PC-9 (cell line): ENCODE measurements at regions of chr13 and their contacts with region 1.

Region 1: GRCh38 chr13:72920097-72920496 is 138.2 kb downstream of the PIBF1 start:
- DNase-seq: no peak
- H3K4me3 ChIP-seq: no peak overlapping the region
- H3K27ac ChIP-seq: no peak overlapping the region
- H3K4me1 ChIP-seq: no peaks in the 10 kb centered on the region
- H3K27me3 ChIP-seq: no peaks in the 10 kb centered on the region
- CTCF ChIP-seq: no peak

Region 2: DNA sequence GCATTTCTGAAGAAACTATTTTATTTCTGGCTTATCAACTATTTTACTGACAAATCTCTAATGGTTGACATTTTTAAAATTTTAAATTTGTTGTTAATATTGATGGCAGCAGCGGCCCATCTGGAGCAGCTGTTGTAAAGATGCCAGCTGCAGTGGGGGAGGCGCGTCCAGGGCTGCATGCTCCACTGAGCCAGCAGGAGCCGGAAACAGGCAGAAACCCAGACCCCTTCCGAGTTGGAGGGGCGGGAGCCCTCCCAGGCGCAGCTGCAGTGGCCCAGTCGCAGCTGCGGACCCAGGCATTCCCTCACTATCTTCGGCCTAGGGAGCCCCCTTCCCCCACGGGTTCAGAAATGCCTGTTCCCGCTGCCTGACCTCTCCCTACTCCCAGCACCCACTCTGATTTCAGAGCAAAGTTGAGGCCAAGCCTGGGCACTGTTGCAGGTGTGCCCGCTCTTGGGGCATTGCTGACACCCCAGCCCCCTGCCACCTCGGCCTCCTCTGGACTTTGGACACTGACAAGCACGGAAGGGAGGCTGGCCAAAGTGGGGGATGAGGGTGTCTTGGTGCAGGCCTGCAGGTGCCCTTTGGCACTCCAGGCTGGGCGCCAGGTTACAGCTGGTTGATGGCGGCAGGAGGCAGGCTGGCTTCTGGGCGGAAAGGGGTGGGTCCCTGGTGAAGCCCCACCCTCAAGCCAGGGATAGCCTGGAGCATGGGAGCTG is 69.0 kb before region 1 on chr13:
- CTCF ChIA-PET with region 1: no interaction called
- POLR2A ChIA-PET with region 1: no interaction called
- intact Hi-C with region 1: loop called (anchors 10 kb)
- DNase-seq: no peak
- H3K4me3 ChIP-seq: no peak overlapping the region
- H3K27ac ChIP-seq: no peak overlapping the region
- H3K4me1 ChIP-seq: no peaks in the 10 kb centered on the region
- H3K27me3 ChIP-seq: no peaks in the 10 kb centered on the region
- CTCF ChIP-seq: no peak

Region 3: DNA sequence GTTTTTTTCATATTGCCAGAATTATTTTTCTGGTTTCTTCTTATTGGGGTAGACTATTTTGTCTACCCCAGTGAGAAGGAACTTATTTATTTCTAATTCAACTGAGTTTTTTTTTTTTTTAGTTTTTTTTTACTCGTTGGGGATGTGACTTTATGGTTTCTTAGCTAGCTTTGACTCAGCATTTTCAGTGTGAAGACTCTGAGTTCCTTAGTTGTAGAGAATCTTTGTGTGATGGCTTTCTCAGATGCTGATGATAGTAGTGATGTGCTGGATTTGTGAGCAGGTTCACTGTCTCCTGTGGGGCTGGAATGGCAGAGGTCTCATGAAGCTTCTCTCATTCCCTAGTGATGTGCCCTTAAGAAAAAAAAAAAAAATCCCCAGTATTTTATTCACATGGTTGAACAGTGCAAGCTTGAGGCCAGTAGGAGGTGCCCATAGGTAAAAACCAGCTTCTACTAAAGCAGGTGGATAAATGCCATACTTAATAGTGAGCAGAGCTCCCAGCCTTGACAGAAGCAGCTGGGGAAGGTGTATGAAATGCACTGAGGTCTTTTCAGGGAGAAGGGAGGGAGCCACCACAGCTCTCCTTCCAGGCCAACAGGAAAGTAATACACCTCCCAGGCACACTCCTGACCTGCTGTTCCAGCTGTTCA is 32.6 kb after region 1 on chr13:
- CTCF ChIA-PET with region 1: no interaction called
- POLR2A ChIA-PET with region 1: interaction called, 12 read pairs
- intact Hi-C with region 1: no loop called
- DNase-seq: no peak
- H3K4me3 ChIP-seq: no peak overlapping the region
- H3K27ac ChIP-seq: no peak overlapping the region
- H3K4me1 ChIP-seq: no peaks in the 10 kb centered on the region
- H3K27me3 ChIP-seq: no peaks in the 10 kb centered on the region
- CTCF ChIP-seq: no peak

Region 4: GRCh38 chr13:73870970-73871935 is 951.2 kb after region 1 on chr13:
- CTCF ChIA-PET with region 1: no interaction called
- POLR2A ChIA-PET with region 1: no interaction called
- intact Hi-C with region 1: no loop called
- DNase-seq: no peak
- H3K4me3 ChIP-seq: no peak overlapping the region
- H3K27ac ChIP-seq: no peak overlapping the region
- H3K4me1 ChIP-seq: no peaks in the 10 kb centered on the region
- H3K27me3 ChIP-seq: no peaks in the 10 kb centered on the region
- CTCF ChIP-seq: no peak